ENCODE measurements at regions of chr16 and their contacts with region 1.

Region 1: GRCh38 chr16:24036614-24037013 is 200.8 kb downstream of the PRKCB start:
- DNase-seq: no peak
- H3K4me3 ChIP-seq: no peak overlapping the region
- H3K27ac ChIP-seq: no peak overlapping the region
- H3K4me1 ChIP-seq: no peaks in the 10 kb centered on the region
- H3K27me3 ChIP-seq: peaks cover 0 to 18% of the 10 kb centered on the region in 2 donors
- CTCF ChIP-seq: peak; percentile 59 to 68

Region 2: DNA sequence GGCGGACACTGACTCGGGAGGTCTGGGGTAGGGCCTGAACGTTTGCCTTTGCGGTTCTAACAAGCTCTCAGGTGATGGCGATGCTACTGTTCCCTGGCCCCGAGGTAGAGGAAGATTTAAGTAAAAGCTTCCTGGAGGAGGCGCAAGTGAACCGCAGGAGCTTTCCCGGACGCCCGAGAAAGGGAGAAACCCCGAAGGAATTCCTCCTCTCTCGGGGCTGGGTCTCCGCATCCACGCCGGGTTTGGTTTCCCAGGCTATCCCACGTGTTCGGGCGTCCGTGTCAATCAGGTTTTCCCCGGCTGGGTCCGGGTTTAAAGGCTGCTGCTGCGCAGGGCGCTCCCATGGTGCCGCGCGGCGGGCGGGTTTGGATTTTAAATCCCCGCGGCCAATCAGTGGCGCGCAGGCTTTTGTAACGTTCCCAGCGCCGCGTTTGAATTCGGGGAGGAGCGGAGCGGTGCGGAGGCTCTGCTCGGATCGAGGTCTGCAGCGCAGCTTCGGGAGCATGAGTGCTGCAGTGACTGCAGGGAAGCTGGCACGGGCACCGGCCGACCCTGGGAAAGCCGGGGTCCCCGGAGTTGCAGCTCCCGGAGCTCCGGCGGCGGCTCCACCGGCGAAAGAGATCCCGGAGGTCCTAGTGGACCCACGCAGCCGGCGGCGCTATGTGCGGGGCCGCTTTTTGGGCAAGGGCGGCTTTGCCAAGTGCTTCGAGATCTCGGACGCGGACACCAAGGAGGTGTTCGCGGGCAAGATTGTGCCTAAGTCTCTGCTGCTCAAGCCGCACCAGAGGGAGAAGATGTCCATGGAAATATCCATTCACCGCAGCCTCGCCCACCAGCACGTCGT is 358.0 kb before region 1 on chr16 and contains the start of gene PLK1:
- intact Hi-C with region 1: loop called (anchors 10 kb)
- DNase-seq: peak; percentile 65 to 82
- H3K4me3 ChIP-seq: peak within 1 kb of the TSS; percentile 52 to 53
- H3K27ac ChIP-seq: peak within 1 kb of the TSS; percentile 33 to 60
- H3K4me1 ChIP-seq: peaks cover 0 to 17% (median 13%) of the 10 kb centered on the region in 4 donors
- H3K27me3 ChIP-seq: no peaks in the 10 kb centered on the region
- CTCF ChIP-seq: peak; percentile 16 to 17

Region 3: DNA sequence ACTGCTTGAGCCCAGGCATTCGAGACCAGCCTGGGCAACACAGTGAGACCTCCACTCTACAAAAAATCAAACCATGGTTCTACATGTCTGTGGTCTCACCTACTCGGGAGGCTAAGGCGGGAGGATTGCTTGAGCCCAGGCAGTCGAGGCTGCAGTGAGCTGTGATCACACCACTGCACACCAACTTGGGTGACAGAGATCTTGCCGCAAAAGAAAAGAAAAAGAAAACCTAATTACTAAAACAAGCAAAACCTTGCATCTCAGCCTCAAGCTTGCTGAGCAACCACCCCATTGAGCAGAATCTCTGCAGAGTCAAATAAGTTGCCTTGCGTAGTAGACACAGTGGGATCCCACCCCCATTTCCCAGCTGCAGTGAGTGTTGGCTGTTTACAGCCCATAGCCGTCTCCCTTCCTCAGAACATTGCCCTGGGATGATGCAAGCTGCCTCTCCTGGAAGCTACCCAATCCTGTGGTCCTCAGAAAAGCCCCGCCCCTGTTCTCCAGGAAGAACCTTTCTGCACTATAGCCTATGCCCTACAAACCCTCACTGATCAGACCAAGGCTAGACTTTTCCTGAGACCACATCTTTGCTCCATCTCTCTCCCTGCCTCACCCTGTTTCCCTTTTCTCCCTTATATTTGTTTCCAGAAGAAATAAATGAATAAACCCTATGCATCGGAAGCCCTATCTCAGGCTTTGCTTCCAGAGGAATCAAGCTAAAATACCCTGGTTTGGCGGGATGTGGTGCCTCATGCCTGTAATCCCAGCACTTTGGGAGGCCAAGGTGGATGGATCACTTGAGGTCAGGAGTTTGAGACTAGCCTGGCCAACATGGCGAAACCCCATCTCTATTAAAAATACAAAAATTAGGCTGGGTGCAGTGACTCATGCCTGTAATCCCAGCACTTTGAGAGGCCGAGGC is 306.9 kb before region 1 on chr16:
- intact Hi-C with region 1: loop called (anchors 10 kb)
- DNase-seq: no peak
- H3K4me3 ChIP-seq: no peak overlapping the region
- H3K27ac ChIP-seq: no peak overlapping the region
- H3K4me1 ChIP-seq: no peaks in the 10 kb centered on the region
- H3K27me3 ChIP-seq: peaks cover 0 to 12% of the 10 kb centered on the region in 2 donors
- CTCF ChIP-seq: no peak

Region 4: DNA sequence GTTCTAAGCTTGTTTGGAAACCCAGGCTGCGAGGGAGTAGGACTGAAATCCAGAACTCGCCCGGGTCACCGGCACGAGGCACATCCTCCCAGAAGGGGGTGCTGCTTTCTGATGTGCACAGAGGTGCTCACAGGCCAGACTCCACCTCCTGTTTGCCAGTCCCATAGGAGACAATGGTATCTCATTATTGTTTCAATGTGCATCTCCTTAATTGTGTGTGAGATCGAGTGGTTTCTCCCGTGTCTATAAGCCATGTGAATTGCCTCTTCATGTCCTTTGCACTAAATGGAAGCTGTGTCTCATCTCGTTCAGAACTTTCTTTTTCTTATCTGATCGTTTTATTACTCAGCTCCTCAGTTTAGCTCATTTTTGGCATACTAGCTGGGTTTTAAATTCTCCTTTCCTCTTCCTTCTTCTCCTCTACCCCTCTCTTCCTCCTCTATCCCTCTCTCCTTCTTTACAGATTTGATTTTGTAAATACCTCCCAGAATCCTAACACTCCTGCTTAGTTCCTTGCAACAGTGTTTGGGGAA is 233.0 kb before region 1 on chr16:
- intact Hi-C with region 1: loop called (anchors 5 kb)
- DNase-seq: peak in 1 of 2 donors; percentile 48
- H3K4me3 ChIP-seq: no peak overlapping the region
- H3K27ac ChIP-seq: no peak overlapping the region
- H3K4me1 ChIP-seq: peaks cover 0 to 10% (median 0%) of the 10 kb centered on the region in 4 donors
- H3K27me3 ChIP-seq: peaks cover 0 to 6% of the 10 kb centered on the region in 2 donors
- CTCF ChIP-seq: peak in 1 of 2 experiments; percentile 28

Region 5: GRCh38 chr16:23924128-23924527 is 112.5 kb before region 1 on chr16:
- intact Hi-C with region 1: no loop called
- DNase-seq: no peak
- H3K4me3 ChIP-seq: no peak overlapping the region
- H3K27ac ChIP-seq: no peak overlapping the region
- H3K4me1 ChIP-seq: no peaks in the 10 kb centered on the region
- H3K27me3 ChIP-seq: no peaks in the 10 kb centered on the region
- CTCF ChIP-seq: no peak

Region 6: GRCh38 chr16:24253192-24253591 is 216.6 kb after region 1 on chr16:
- intact Hi-C with region 1: loop called (anchors 5 kb)
- DNase-seq: no peak
- H3K4me3 ChIP-seq: no peak overlapping the region
- H3K27ac ChIP-seq: no peak overlapping the region
- H3K4me1 ChIP-seq: no peaks in the 10 kb centered on the region
- H3K27me3 ChIP-seq: peaks cover 0 to 32% of the 10 kb centered on the region in 2 donors
- CTCF ChIP-seq: peak; percentile 34 to 40

Measured in tibial artery (tissue), 4 donors.